ENCODE measurements at regions of chr20 and their contacts with region 1.

Region 1: DNA sequence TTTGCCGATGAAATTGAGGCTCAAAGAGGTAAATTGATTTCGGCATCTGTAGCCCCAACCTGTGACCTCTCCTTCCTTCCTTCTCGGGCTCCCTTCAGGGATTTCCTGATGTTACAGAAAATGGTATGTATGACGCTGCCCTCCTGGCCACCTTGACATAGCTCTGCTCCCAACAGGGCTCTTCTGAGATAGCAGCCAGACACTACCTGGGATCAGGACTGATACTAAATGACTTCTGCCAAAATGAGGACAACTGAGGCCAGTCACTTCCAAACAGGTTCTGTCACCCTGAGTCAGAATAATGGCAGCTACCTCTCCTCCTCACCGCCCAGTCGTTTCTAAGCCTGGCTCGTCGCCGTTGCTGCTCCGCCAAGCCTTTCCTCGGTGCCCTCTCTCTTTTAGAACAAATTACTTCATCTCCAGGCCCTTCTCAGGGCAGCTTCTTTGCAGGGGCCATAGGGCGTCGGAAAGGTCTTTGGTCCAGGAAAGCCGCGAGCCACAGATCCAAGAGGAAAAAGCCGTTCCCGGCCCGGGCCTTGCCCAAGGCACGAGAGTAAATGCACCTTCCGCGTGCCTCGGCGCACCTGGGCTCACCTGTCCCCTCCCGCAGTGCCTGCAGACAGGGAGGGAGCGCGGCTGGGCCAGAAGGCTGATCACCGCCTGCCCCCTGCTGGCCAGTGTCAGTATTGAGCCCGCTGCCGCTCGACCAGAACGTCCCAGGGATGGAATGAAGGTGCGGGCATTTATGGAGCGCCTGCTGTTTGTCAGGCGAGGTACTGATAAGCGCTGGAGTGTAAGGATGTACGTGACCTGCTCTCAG is 904 bp upstream of the LPIN3 start:
- DNase-seq: peak; percentile 86
- ATAC-seq: peak; percentile 93
- H3K4me3 ChIP-seq: peak overlapping the region in 4 of 5 experiments; percentile 17 to 45 (median 39)
- H3K4me3 Mint-ChIP-seq: peak overlapping the region; percentile 84
- H3K27ac ChIP-seq: no peak overlapping the region
- H3K27ac Mint-ChIP-seq: no peak overlapping the region
- H3K4me1 ChIP-seq: peaks cover 12 to 15% of the 10 kb centered on the region in 2 donors
- H3K4me1 Mint-ChIP-seq: peaks cover 12% of the 10 kb centered on the region
- H3K27me3 ChIP-seq: peaks cover 0 to 20% (median 6%) of the 10 kb centered on the region in 4 experiments
- H3K27me3 Mint-ChIP-seq: peaks cover 15% of the 10 kb centered on the region
- CTCF ChIP-seq: peak; percentile 100

Region 2: GRCh38 chr20:40970201-40970600 is 369.5 kb before region 1 on chr20:
- CTCF ChIA-PET with region 1: interaction called, 6 read pairs
- POLR2A ChIA-PET with region 1: no interaction called
- intact Hi-C with region 1: loop called (anchors 1 kb)
- DNase-seq: no peak
- ATAC-seq: no peak
- H3K4me3 ChIP-seq: no peak overlapping the region
- H3K4me3 Mint-ChIP-seq: no peak overlapping the region
- H3K27ac ChIP-seq: no peak overlapping the region
- H3K27ac Mint-ChIP-seq: no peak overlapping the region
- H3K4me1 ChIP-seq: peaks cover 0 to 9% of the 10 kb centered on the region in 2 donors
- H3K4me1 Mint-ChIP-seq: peaks cover 12% of the 10 kb centered on the region
- H3K27me3 ChIP-seq: peaks cover 0 to 5% (median 2%) of the 10 kb centered on the region in 4 experiments
- H3K27me3 Mint-ChIP-seq: peaks cover 4% of the 10 kb centered on the region
- CTCF ChIP-seq: no peak

Region 3: DNA sequence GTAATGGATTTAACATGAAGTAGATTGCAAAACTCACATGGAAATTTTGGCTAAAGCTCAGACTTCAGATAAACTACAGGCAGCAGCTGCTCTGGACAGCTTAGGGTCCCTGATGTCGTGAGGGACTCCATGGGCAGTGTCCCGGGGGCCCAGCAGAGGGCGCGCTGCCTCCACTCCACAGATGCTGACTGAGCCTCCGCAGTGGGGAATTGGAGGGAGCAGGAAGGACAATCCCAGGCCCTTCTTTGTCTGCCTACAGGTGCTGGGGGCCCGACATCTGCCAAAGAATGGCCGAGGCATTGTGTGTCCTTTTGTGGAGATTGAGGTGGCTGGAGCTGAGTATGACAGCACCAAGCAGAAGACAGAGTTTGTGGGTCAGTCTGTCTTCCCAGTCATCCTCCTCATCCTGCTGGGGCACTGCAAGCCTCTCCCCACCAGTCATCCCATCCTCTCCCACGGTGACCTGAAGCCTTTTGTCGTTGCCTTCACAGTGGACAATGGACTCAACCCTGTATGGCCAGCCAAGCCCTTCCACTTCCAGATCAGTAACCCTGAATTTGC is 166.5 kb before region 1 on chr20:
- CTCF ChIA-PET with region 1: interaction called, 196 read pairs
- POLR2A ChIA-PET with region 1: no interaction called
- intact Hi-C with region 1: no loop called
- DNase-seq: peak; percentile 71
- ATAC-seq: peak; percentile 89
- H3K4me3 ChIP-seq: no peak overlapping the region
- H3K4me3 Mint-ChIP-seq: no peak overlapping the region
- H3K27ac ChIP-seq: no peak overlapping the region
- H3K27ac Mint-ChIP-seq: peak overlapping the region; percentile 61
- H3K4me1 ChIP-seq: no peaks in the 10 kb centered on the region
- H3K4me1 Mint-ChIP-seq: no peaks in the 10 kb centered on the region
- H3K27me3 ChIP-seq: no peaks in the 10 kb centered on the region
- H3K27me3 Mint-ChIP-seq: no peaks in the 10 kb centered on the region
- CTCF ChIP-seq: peak; percentile 89

Region 4: GRCh38 chr20:41232973-41233926 is 106.5 kb before region 1 on chr20:
- CTCF ChIA-PET with region 1: interaction called, 9 read pairs
- POLR2A ChIA-PET with region 1: interaction called, 5 read pairs
- intact Hi-C with region 1: loop called (anchors 1 kb)
- DNase-seq: no peak
- ATAC-seq: peak; percentile 41
- H3K4me3 ChIP-seq: no peak overlapping the region
- H3K4me3 Mint-ChIP-seq: peak overlapping the region; percentile 17
- H3K27ac ChIP-seq: no peak overlapping the region
- H3K27ac Mint-ChIP-seq: peak overlapping the region; percentile 8
- H3K4me1 ChIP-seq: peaks cover 9 to 15% of the 10 kb centered on the region in 2 donors
- H3K4me1 Mint-ChIP-seq: peaks cover 26% of the 10 kb centered on the region
- H3K27me3 ChIP-seq: no peaks in the 10 kb centered on the region
- H3K27me3 Mint-ChIP-seq: no peaks in the 10 kb centered on the region
- CTCF ChIP-seq: no peak

Region 5: DNA sequence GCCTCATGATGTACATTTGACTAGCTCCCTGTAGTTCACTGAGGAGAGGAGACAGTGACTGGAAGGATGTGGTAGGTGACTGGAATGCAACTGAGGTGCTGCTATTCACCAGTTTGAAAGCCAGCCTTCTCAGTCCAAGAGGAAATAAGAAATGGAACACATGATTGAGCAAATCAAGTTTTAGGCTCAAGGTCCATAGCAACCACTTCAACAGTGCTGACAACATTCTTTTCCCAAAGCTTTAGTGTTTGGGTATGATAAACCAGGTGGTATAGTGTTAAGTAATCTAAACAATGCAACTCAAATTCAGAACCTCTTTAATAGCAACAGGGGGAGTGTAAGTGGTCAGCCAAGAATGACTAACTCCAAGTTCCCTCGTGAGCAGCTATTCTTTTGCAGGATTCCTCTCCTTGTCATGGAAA is 31.4 kb before region 1 on chr20:
- CTCF ChIA-PET with region 1: interaction called, 21 read pairs
- POLR2A ChIA-PET with region 1: no interaction called
- intact Hi-C with region 1: no loop called
- DNase-seq: no peak
- ATAC-seq: no peak
- H3K4me3 ChIP-seq: no peak overlapping the region
- H3K4me3 Mint-ChIP-seq: no peak overlapping the region
- H3K27ac ChIP-seq: no peak overlapping the region
- H3K27ac Mint-ChIP-seq: no peak overlapping the region
- H3K4me1 ChIP-seq: peaks cover 19 to 22% of the 10 kb centered on the region in 2 donors
- H3K4me1 Mint-ChIP-seq: peaks cover 28% of the 10 kb centered on the region
- H3K27me3 ChIP-seq: no peaks in the 10 kb centered on the region
- H3K27me3 Mint-ChIP-seq: no peaks in the 10 kb centered on the region
- CTCF ChIP-seq: no peak

Region 6: GRCh38 chr20:41329435-41330342 is 10.0 kb before region 1 on chr20:
- CTCF ChIA-PET with region 1: interaction called, 21 read pairs
- POLR2A ChIA-PET with region 1: interaction called, 4 read pairs
- intact Hi-C with region 1: no loop called
- DNase-seq: peak; percentile 55
- ATAC-seq: peak; percentile 97
- H3K4me3 ChIP-seq: peak overlapping the region in 1 of 5 experiments; percentile 10
- H3K4me3 Mint-ChIP-seq: peak overlapping the region; percentile 39
- H3K27ac ChIP-seq: no peak overlapping the region
- H3K27ac Mint-ChIP-seq: peak overlapping the region; percentile 21
- H3K4me1 ChIP-seq: peaks cover 12 to 13% of the 10 kb centered on the region in 2 donors
- H3K4me1 Mint-ChIP-seq: peaks cover 13% of the 10 kb centered on the region
- H3K27me3 ChIP-seq: peaks cover 0 to 5% (median 0%) of the 10 kb centered on the region in 4 experiments
- H3K27me3 Mint-ChIP-seq: peaks cover 4% of the 10 kb centered on the region
- CTCF ChIP-seq: no peak

Region 7: DNA sequence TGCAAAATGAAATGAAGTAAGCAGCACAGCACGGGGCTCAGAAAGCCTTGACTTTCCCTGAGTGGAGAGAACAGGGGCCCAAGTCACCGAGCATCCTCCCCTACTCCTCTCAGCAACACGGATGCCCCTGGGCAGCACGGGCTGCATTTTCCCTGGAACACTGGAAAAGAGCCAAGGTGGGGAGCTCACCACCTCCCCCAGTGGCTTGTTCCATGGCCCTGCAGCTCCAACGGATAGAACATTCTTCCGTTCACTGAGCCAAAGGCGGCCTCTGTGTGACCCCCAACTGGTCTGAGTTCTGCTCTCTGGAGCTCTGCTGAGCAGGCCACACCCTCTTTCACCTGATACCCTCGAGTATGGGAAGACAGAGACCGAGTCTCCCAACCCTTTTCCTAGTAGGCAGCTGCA is 47.7 kb after region 1 on chr20:
- CTCF ChIA-PET with region 1: no interaction called
- POLR2A ChIA-PET with region 1: no interaction called
- intact Hi-C with region 1: no loop called
- DNase-seq: no peak
- ATAC-seq: no peak
- H3K4me3 ChIP-seq: no peak overlapping the region
- H3K4me3 Mint-ChIP-seq: no peak overlapping the region
- H3K27ac ChIP-seq: no peak overlapping the region
- H3K27ac Mint-ChIP-seq: no peak overlapping the region
- H3K4me1 ChIP-seq: peaks cover 0 to 2% of the 10 kb centered on the region in 2 donors
- H3K4me1 Mint-ChIP-seq: no peaks in the 10 kb centered on the region
- H3K27me3 ChIP-seq: no peaks in the 10 kb centered on the region
- H3K27me3 Mint-ChIP-seq: peaks cover 21% of the 10 kb centered on the region
- CTCF ChIP-seq: no peak

Region 8: GRCh38 chr20:41443691-41444090 is 104.0 kb after region 1 on chr20:
- CTCF ChIA-PET with region 1: no interaction called
- POLR2A ChIA-PET with region 1: no interaction called
- intact Hi-C with region 1: no loop called
- DNase-seq: no peak
- ATAC-seq: no peak
- H3K4me3 ChIP-seq: no peak overlapping the region
- H3K4me3 Mint-ChIP-seq: no peak overlapping the region
- H3K27ac ChIP-seq: no peak overlapping the region
- H3K27ac Mint-ChIP-seq: no peak overlapping the region
- H3K4me1 ChIP-seq: no peaks in the 10 kb centered on the region
- H3K4me1 Mint-ChIP-seq: peaks cover 1% of the 10 kb centered on the region
- H3K27me3 ChIP-seq: no peaks in the 10 kb centered on the region
- H3K27me3 Mint-ChIP-seq: no peaks in the 10 kb centered on the region
- CTCF ChIP-seq: no peak